CD8-positive, alpha-beta T cell (primary cell): ENCODE measurements at regions of chr3 and their contacts with region 1.

Region 1: DNA sequence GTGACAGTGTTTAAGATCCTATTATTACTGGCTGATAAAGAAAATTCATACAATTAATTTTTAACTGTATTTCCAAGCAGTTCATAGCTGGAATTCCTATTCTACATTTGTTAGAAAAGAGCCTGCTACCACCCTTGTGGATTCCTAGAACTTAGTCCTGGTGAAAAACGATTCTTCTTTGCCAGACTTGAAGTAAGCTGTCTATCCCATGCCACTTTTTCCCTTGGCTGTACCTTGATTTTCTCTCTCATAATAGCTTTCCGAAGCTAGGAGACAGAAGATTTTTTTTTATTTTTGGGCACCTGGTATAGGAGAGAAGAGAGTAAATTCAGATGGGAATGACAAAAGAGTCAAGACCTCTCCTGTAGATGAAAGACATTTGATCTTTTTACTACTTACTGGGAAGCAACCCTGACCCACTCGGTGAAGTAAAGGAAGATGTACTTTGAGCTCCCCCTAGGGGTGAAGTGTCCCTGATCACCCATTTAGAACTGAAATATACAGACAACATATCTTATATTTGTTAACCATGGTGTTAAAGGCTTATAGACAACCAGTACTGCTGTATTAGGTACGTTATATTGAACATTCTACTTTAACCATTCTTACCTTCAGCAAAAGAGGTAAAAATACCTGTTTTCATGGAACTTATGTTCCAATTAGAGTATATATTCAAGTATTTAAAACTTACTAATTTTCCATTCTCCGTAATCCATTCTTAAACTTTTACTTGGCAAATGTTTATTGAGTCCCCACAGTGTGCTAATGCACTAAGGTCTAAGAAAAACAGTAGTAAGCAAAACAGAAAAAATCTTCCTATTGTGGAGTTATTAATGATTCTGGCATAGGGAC is 36.2 kb upstream of the C3orf38 start:
- DNase-seq: peak; percentile 6 to 80 (median 55)
- ATAC-seq: peak; percentile 90
- H3K4me3 ChIP-seq: no peak overlapping the region
- H3K4me3 Mint-ChIP-seq: no peak overlapping the region
- H3K27ac ChIP-seq: no peak overlapping the region
- H3K27ac Mint-ChIP-seq: peak overlapping the region; percentile 28
- H3K4me1 ChIP-seq: no peaks in the 10 kb centered on the region
- H3K4me1 Mint-ChIP-seq: peaks cover 24% of the 10 kb centered on the region
- H3K27me3 ChIP-seq: no peaks in the 10 kb centered on the region
- H3K27me3 Mint-ChIP-seq: no peaks in the 10 kb centered on the region
- CTCF ChIP-seq: peak; percentile 71

Region 2: DNA sequence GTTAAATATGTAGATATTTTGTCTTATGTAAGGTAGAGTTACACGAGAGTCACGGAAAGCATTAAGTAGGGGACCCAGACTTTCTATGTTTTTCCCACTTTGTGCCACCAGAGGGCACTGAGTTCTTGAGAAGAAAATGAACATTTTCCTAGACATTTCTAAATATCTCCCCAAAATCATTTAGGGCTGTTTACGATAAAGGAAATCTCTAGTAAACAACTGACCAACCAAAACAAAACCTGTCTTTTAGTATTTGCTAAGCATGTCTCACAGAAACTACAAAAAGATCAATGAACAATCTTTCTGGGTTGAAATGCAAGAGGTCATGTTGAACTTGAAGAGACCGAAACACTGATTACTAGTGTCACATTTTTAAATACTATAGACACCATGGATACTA is 853.3 kb before region 1 on chr3:
- CTCF ChIA-PET with region 1: no interaction called
- POLR2A ChIA-PET with region 1: no interaction called
- intact Hi-C with region 1: loop called in 1 of 2 experiments (anchors 2 kb)
- DNase-seq: peak in 6 of 9 experiments; percentile 14 to 59 (median 43)
- ATAC-seq: peak; percentile 66
- H3K4me3 ChIP-seq: no peak overlapping the region
- H3K4me3 Mint-ChIP-seq: no peak overlapping the region
- H3K27ac ChIP-seq: no peak overlapping the region
- H3K27ac Mint-ChIP-seq: no peak overlapping the region
- H3K4me1 ChIP-seq: no peaks in the 10 kb centered on the region
- H3K4me1 Mint-ChIP-seq: peaks cover 2% of the 10 kb centered on the region
- H3K27me3 ChIP-seq: no peaks in the 10 kb centered on the region
- H3K27me3 Mint-ChIP-seq: no peaks in the 10 kb centered on the region
- CTCF ChIP-seq: peak; percentile 61

Region 3: GRCh38 chr3:87350364-87351199 is 763.0 kb before region 1 on chr3:
- CTCF ChIA-PET with region 1: interaction called, 19 read pairs
- POLR2A ChIA-PET with region 1: no interaction called
- intact Hi-C with region 1: loop called (anchors 1 kb)
- DNase-seq: peak in 6 of 9 experiments; percentile 6 to 66 (median 18)
- ATAC-seq: peak; percentile 82
- H3K4me3 ChIP-seq: no peak overlapping the region
- H3K4me3 Mint-ChIP-seq: no peak overlapping the region
- H3K27ac ChIP-seq: no peak overlapping the region
- H3K27ac Mint-ChIP-seq: no peak overlapping the region
- H3K4me1 ChIP-seq: no peaks in the 10 kb centered on the region
- H3K4me1 Mint-ChIP-seq: no peaks in the 10 kb centered on the region
- H3K27me3 ChIP-seq: no peaks in the 10 kb centered on the region
- H3K27me3 Mint-ChIP-seq: peaks cover 3% of the 10 kb centered on the region
- CTCF ChIP-seq: peak; percentile 93

Region 4: GRCh38 chr3:87607234-87607633 is 506.3 kb before region 1 on chr3:
- CTCF ChIA-PET with region 1: no interaction called
- POLR2A ChIA-PET with region 1: no interaction called
- intact Hi-C with region 1: no loop called
- DNase-seq: no peak
- ATAC-seq: no peak
- H3K4me3 ChIP-seq: no peak overlapping the region
- H3K4me3 Mint-ChIP-seq: no peak overlapping the region
- H3K27ac ChIP-seq: no peak overlapping the region
- H3K27ac Mint-ChIP-seq: no peak overlapping the region
- H3K4me1 ChIP-seq: no peaks in the 10 kb centered on the region
- H3K4me1 Mint-ChIP-seq: no peaks in the 10 kb centered on the region
- H3K27me3 ChIP-seq: no peaks in the 10 kb centered on the region
- H3K27me3 Mint-ChIP-seq: no peaks in the 10 kb centered on the region
- CTCF ChIP-seq: no peak

Region 5: GRCh38 chr3:87900061-87900460 is 213.5 kb before region 1 on chr3:
- CTCF ChIA-PET with region 1: no interaction called
- POLR2A ChIA-PET with region 1: no interaction called
- intact Hi-C with region 1: loop called in 1 of 2 experiments (anchors 5 kb)
- DNase-seq: peak in 1 of 9 experiments; percentile 6
- ATAC-seq: no peak
- H3K4me3 ChIP-seq: no peak overlapping the region
- H3K4me3 Mint-ChIP-seq: no peak overlapping the region
- H3K27ac ChIP-seq: no peak overlapping the region
- H3K27ac Mint-ChIP-seq: no peak overlapping the region
- H3K4me1 ChIP-seq: no peaks in the 10 kb centered on the region
- H3K4me1 Mint-ChIP-seq: no peaks in the 10 kb centered on the region
- H3K27me3 ChIP-seq: no peaks in the 10 kb centered on the region
- H3K27me3 Mint-ChIP-seq: no peaks in the 10 kb centered on the region
- CTCF ChIP-seq: no peak

Region 6: GRCh38 chr3:88131695-88132094 is 18.2 kb after region 1 on chr3:
- CTCF ChIA-PET with region 1: interaction called, 5 read pairs
- POLR2A ChIA-PET with region 1: interaction called, 3 read pairs
- intact Hi-C with region 1: loop called in 1 of 2 experiments (anchors 2 kb)
- DNase-seq: no peak
- ATAC-seq: no peak
- H3K4me3 ChIP-seq: no peak overlapping the region
- H3K4me3 Mint-ChIP-seq: no peak overlapping the region
- H3K27ac ChIP-seq: no peak overlapping the region
- H3K27ac Mint-ChIP-seq: no peak overlapping the region
- H3K4me1 ChIP-seq: no peaks in the 10 kb centered on the region
- H3K4me1 Mint-ChIP-seq: peaks cover 6% of the 10 kb centered on the region
- H3K27me3 ChIP-seq: no peaks in the 10 kb centered on the region
- H3K27me3 Mint-ChIP-seq: no peaks in the 10 kb centered on the region
- CTCF ChIP-seq: no peak

Region 7: DNA sequence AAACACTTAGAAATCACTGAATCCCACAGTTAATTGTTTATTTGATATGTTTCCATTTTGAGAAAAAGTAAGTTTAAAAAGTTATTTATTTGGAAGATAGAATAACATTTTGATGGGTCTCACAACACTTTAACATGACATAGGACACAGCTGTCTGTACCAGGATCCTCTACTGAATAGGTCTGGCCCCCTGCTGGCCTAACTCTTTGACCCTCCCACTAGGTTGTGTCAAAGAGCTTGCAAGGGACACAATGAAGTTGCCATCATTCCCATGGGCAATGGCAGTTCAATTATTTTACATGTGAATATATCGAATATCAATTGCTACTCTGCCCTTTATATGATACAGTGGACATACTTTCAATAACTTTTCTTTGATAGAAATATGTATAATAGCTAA is 1132.8 kb after region 1 on chr3:
- CTCF ChIA-PET with region 1: no interaction called
- POLR2A ChIA-PET with region 1: no interaction called
- intact Hi-C with region 1: no loop called
- DNase-seq: no peak
- ATAC-seq: no peak
- H3K4me3 ChIP-seq: no peak overlapping the region
- H3K4me3 Mint-ChIP-seq: no peak overlapping the region
- H3K27ac ChIP-seq: no peak overlapping the region
- H3K27ac Mint-ChIP-seq: no peak overlapping the region
- H3K4me1 ChIP-seq: no peaks in the 10 kb centered on the region
- H3K4me1 Mint-ChIP-seq: no peaks in the 10 kb centered on the region
- H3K27me3 ChIP-seq: no peaks in the 10 kb centered on the region
- H3K27me3 Mint-ChIP-seq: no peaks in the 10 kb centered on the region
- CTCF ChIP-seq: no peak